ENCODE measurements at regions of chr1 and their contacts with region 1.

Region 1: GRCh38 chr1:208207388-208208131 is 36.6 kb downstream of the PLXNA2 start:
- DNase-seq: no peak
- ATAC-seq: no peak
- H3K4me3 ChIP-seq: no peak overlapping the region
- H3K27ac ChIP-seq: no peak overlapping the region
- H3K4me1 ChIP-seq: peaks cover 23% of the 10 kb centered on the region
- CTCF ChIP-seq: no peak
- EP300 ChIP-seq: no peak
- POLR2A ChIP-seq: no peak
- RAD21 ChIP-seq: no peak

Region 2: DNA sequence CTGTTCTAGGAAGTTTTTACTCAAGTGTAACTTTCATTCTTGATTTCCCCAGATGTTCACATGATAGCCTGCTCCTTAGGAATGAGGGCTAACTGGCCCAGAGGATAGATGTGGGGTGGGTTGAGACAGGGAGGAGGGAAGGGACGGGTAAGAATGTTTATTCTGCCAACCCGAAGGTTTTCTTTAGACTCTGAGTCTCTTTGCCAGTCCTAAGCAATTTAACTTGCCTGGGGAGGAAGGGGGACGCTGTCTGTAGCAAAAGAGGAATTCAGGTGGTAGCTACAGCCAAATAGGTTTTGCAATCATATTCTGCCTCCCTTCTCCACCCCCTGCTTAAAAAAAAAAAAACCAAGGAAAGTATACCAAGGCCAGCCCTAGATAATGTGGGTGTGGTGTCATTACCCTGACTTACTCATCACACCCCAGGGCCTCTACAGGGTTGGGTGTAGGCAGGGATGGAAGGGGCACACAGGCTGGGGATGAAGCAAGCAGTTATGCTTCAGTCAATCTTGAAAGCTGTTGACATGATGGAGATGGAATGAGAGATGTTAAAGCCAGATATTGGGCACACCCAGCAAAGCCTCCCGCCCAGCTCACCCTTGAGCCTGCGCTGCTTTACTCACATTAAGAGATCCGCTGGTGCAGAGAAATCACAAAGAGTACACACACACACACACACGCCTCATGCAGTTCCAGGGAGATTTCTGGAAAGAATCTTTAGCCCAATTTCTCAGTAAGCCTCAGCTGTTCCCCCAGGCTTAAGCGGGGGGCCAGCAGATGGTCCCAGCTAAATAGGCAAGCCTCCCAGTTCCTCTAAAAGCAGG is 23.3 kb before region 1 on chr1:
- CTCF ChIA-PET with region 1: interaction called, 5 read pairs
- POLR2A ChIA-PET with region 1: interaction called, 19 read pairs
- DNase-seq: peak; percentile 92 to 95
- ATAC-seq: peak; percentile 96 to 98
- H3K4me3 ChIP-seq: no peak overlapping the region
- H3K27ac ChIP-seq: peak overlapping the region; percentile 66 to 81
- H3K4me1 ChIP-seq: peaks cover 60% of the 10 kb centered on the region
- CTCF ChIP-seq: no peak
- EP300 ChIP-seq: peak; percentile 69 to 79; a peak in 3 of 5 replicates
- POLR2A ChIP-seq: no peak
- RAD21 ChIP-seq: peak in 1 of 2 experiments; percentile 14; a peak in 3 of 5 replicates

Region 3: GRCh38 chr1:208219659-208220282 is 12.2 kb after region 1 on chr1:
- CTCF ChIA-PET with region 1: interaction called, 10 read pairs
- POLR2A ChIA-PET with region 1: interaction called, 3 read pairs
- DNase-seq: no peak
- ATAC-seq: peak in 1 of 2 experiments; percentile 17; a peak in 1 of 6 replicates
- H3K4me3 ChIP-seq: no peak overlapping the region
- H3K27ac ChIP-seq: peak overlapping the region; percentile 25 to 59; a peak in 3 of 6 replicates
- H3K4me1 ChIP-seq: peaks cover 22% of the 10 kb centered on the region
- CTCF ChIP-seq: no peak
- EP300 ChIP-seq: no peak
- POLR2A ChIP-seq: no peak
- RAD21 ChIP-seq: no peak